B cell (primary cell): ENCODE measurements at regions of chr3 and their contacts with region 1.

Region 1: GRCh38 chr3:53180305-53181023 is 19.5 kb downstream of the PRKCD start:
- DNase-seq: peak; percentile 92
- ATAC-seq: peak; percentile 97
- H3K4me3 ChIP-seq: peak overlapping the region in 4 of 5 experiments; percentile 16 to 57 (median 22)
- H3K4me3 Mint-ChIP-seq: peak overlapping the region; percentile 83
- H3K27ac ChIP-seq: peak overlapping the region in 1 of 2 donors; percentile 63
- H3K27ac Mint-ChIP-seq: peak overlapping the region; percentile 82
- H3K4me1 ChIP-seq: peaks cover 40 to 64% of the 10 kb centered on the region in 2 donors
- H3K4me1 Mint-ChIP-seq: peaks cover 54% of the 10 kb centered on the region
- H3K27me3 ChIP-seq: no peaks in the 10 kb centered on the region
- H3K27me3 Mint-ChIP-seq: no peaks in the 10 kb centered on the region
- CTCF ChIP-seq: no peak

Region 2: DNA sequence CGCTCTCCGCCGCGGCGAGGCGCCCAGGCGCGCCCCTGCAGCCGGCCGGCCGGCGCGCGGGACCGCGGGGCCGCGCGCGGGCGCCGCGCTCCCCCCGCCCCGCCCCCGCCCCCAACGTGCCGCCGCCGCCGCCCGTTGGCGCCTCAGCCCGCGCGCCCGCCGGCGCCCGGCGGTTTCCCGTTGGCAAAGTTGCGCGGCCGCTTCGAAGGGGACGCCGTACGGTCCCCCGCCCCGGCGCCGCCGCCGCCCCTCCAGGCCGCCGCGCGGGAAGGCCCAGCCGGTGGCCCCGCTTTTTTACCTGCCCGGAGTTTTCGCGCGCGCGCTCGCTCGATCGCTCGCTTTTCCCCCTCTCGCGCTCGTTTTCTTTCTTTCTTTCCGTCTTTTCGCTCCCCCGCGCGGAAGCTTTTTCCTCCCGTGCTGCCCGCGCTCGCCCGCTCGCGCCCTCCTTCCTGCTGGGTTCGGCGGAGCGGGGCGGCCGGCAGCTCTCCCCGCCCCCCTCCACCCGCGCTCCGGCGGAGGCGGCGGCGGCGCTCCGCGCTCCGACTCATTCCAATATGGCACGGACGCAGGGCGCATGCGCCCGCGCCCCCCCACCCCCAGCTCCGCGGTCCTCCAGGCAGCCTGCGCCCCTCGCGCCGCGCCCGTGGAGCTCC is 134.8 kb before region 1 on chr3 and contains the start of gene SFMBT1:
- CTCF ChIA-PET with region 1: no interaction called
- POLR2A ChIA-PET with region 1: no interaction called
- intact Hi-C with region 1: no loop called
- DNase-seq: peak; percentile 92
- ATAC-seq: peak; percentile 51
- H3K4me3 ChIP-seq: peak within 1 kb of the TSS; percentile 41 to 94 (median 84)
- H3K4me3 Mint-ChIP-seq: peak within 1 kb of the TSS; percentile 98
- H3K27ac ChIP-seq: peak within 1 kb of the TSS; percentile 83 to 88
- H3K27ac Mint-ChIP-seq: peak within 1 kb of the TSS; percentile 99
- H3K4me1 ChIP-seq: peaks cover 19 to 30% of the 10 kb centered on the region in 2 donors
- H3K4me1 Mint-ChIP-seq: peaks cover 43% of the 10 kb centered on the region
- H3K27me3 ChIP-seq: no peaks in the 10 kb centered on the region
- H3K27me3 Mint-ChIP-seq: no peaks in the 10 kb centered on the region
- CTCF ChIP-seq: no peak
- total RNA-seq, gene SFMBT1: 55.8 and 60.3 TPM in 2 replicates

Region 3: GRCh38 chr3:53114011-53114400 is 66.5 kb before region 1 on chr3:
- CTCF ChIA-PET with region 1: interaction called, 12 read pairs
- POLR2A ChIA-PET with region 1: interaction called, 6 read pairs
- intact Hi-C with region 1: no loop called
- DNase-seq: peak; percentile 86
- ATAC-seq: peak; percentile 84
- H3K4me3 ChIP-seq: no peak overlapping the region
- H3K4me3 Mint-ChIP-seq: no peak overlapping the region
- H3K27ac ChIP-seq: no peak overlapping the region
- H3K27ac Mint-ChIP-seq: no peak overlapping the region
- H3K4me1 ChIP-seq: no peaks in the 10 kb centered on the region
- H3K4me1 Mint-ChIP-seq: no peaks in the 10 kb centered on the region
- H3K27me3 ChIP-seq: no peaks in the 10 kb centered on the region
- H3K27me3 Mint-ChIP-seq: no peaks in the 10 kb centered on the region
- CTCF ChIP-seq: peak; percentile 90

Region 4: GRCh38 chr3:53160660-53161449 is 19.6 kb before region 1 on chr3 and contains the start of gene PRKCD:
- CTCF ChIA-PET with region 1: interaction called, 16 read pairs
- POLR2A ChIA-PET with region 1: interaction called, 7 read pairs
- intact Hi-C with region 1: loop called (anchors 1 kb)
- DNase-seq: peak; percentile 91
- ATAC-seq: peak; percentile 70
- H3K4me3 ChIP-seq: peak within 1 kb of the TSS; percentile 46 to 98 (median 86)
- H3K4me3 Mint-ChIP-seq: peak within 1 kb of the TSS; percentile 94
- H3K27ac ChIP-seq: peak within 1 kb of the TSS; percentile 80 to 82
- H3K27ac Mint-ChIP-seq: peak within 1 kb of the TSS; percentile 96
- H3K4me1 ChIP-seq: peaks cover 44 to 67% of the 10 kb centered on the region in 2 donors
- H3K4me1 Mint-ChIP-seq: peaks cover 54% of the 10 kb centered on the region
- H3K27me3 ChIP-seq: peaks cover 0 to 12% (median 5%) of the 10 kb centered on the region in 4 experiments
- H3K27me3 Mint-ChIP-seq: peaks cover 2% of the 10 kb centered on the region
- CTCF ChIP-seq: peak; percentile 70
- total RNA-seq, gene PRKCD: 42.7 and 46.7 TPM in 2 replicates

Region 5: DNA sequence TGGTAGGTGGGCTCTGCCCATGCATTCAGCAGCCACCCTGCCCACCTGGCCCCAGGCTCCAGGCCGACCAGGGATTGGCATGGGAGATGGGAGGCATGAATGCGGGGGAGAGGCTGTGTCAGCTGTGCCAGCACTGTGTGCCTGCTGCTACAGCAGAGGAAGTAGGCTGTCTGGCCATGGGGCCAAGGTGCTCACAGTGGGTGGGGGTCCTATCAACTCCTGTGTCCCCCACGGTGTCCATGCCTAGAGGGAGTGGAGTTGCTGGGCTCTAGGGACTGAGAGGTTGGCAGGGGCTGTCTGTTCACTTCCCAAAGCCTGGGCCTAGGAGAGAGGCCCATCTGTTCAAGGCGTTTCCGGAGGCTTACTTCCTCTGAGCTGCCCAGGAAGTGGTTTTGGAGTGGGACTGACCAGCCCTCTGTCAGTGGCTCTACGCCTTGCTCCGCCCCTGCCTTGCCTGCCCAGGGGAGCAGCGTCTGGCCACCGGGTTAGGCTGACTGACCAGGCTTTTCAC is 13.6 kb before region 1 on chr3:
- CTCF ChIA-PET with region 1: no interaction called
- POLR2A ChIA-PET with region 1: interaction called, 17 read pairs
- intact Hi-C with region 1: loop called (anchors 1 kb)
- DNase-seq: no peak
- ATAC-seq: no peak
- H3K4me3 ChIP-seq: no peak overlapping the region
- H3K4me3 Mint-ChIP-seq: peak overlapping the region; percentile 6
- H3K27ac ChIP-seq: peak overlapping the region; percentile 46 to 59
- H3K27ac Mint-ChIP-seq: peak overlapping the region; percentile 68
- H3K4me1 ChIP-seq: peaks cover 85 to 99% of the 10 kb centered on the region in 2 donors
- H3K4me1 Mint-ChIP-seq: peaks cover 92% of the 10 kb centered on the region
- H3K27me3 ChIP-seq: no peaks in the 10 kb centered on the region
- H3K27me3 Mint-ChIP-seq: no peaks in the 10 kb centered on the region
- CTCF ChIP-seq: no peak

Region 6: GRCh38 chr3:53269888-53270880 is 89.7 kb after region 1 on chr3:
- CTCF ChIA-PET with region 1: no interaction called
- POLR2A ChIA-PET with region 1: no interaction called
- intact Hi-C with region 1: no loop called
- DNase-seq: no peak
- ATAC-seq: no peak
- H3K4me3 ChIP-seq: no peak overlapping the region
- H3K4me3 Mint-ChIP-seq: no peak overlapping the region
- H3K27ac ChIP-seq: no peak overlapping the region
- H3K27ac Mint-ChIP-seq: no peak overlapping the region
- H3K4me1 ChIP-seq: peaks cover 0 to 4% of the 10 kb centered on the region in 2 donors
- H3K4me1 Mint-ChIP-seq: peaks cover 1% of the 10 kb centered on the region
- H3K27me3 ChIP-seq: no peaks in the 10 kb centered on the region
- H3K27me3 Mint-ChIP-seq: no peaks in the 10 kb centered on the region
- CTCF ChIP-seq: no peak